ENCODE measurements at regions of chr3 and their contacts with region 1.

Region 1: GRCh38 chr3:42880601-42881451 is 5.1 kb upstream of the CYP8B1 start:
- DNase-seq: peak; percentile 79 to 92 (median 86)
- H3K4me3 ChIP-seq: peak overlapping the region in 3 of 4 donors; percentile 25 to 60 (median 40)
- H3K27ac ChIP-seq: peak overlapping the region in 3 of 5 donors; percentile 9 to 47 (median 45)
- H3K4me1 ChIP-seq: peaks cover 0 to 8% of the 10 kb centered on the region in 2 donors
- H3K27me3 ChIP-seq: no peaks in the 10 kb centered on the region
- CTCF ChIP-seq: peak; percentile 74 to 96 (median 93)
- POLR2A ChIP-seq: no peak

Region 2: DNA sequence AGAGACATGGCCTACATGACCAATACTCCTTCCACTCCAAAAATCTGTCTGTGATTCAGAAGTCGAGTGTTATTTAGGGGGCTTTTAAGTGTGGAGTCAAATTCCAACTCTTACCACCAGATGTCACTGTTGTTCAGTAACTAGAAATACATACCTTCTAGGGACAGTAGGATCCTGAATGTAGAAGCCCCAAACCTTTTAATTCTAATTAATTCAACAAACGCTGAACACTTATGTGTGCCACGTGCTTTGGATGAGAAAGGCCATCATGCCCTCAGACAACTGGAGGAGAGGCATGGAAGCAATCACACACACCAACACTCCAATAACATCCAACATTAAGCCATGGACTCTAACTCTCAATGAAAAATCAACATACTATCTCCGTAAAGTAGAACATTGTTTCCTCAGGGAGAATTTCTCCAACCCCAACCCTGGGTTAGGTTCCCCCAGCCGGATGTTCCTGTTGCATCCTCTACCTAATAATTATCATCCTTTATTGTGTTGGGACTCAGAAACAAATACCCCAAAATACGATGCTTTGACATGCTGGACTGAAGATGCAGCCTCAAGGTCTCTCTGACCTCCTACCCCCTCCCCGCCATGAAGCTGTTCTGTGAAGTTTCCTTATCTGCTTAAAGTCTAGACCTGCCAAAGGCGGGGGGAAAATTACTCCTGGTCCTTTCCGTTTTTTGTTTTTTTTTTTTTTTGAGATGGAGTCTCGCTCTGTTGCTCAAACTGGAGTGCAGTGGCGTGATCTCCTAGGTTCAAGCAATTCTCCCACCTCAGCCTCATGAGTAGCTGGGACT is 99.7 kb before region 1 on chr3:
- intact Hi-C with region 1: loop called (anchors 2 to 10 kb)
- DNase-seq: peak in 2 of 7 donors; percentile 22 to 36
- H3K4me3 ChIP-seq: no peak overlapping the region
- H3K27ac ChIP-seq: peak overlapping the region in 2 of 5 donors; percentile 43 to 75
- H3K4me1 ChIP-seq: peaks cover 12 to 43% of the 10 kb centered on the region in 2 donors
- H3K27me3 ChIP-seq: no peaks in the 10 kb centered on the region
- CTCF ChIP-seq: peak; percentile 69 to 87 (median 80)
- POLR2A ChIP-seq: no peak

Region 3: DNA sequence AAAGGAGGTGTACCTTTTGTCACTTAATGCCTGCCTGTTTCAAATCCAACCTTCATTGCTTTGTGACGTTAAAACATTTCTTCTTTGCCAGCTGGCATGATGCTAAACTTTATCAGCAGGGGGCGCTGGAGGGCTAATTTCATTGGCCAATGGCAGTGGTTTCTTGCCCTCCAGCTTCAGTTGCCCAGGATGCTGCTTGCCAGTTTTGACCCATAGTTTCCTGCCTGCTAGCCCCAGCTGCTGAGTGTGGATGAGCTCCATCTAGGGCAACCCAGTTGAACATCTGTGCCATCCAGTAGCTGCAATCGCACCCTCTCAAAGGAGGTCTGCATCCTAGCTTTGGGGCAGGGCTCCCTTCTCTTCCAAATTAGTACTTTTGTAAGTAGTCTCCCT is 49.5 kb before region 1 on chr3:
- intact Hi-C with region 1: loop called (anchors 2 to 5 kb)
- DNase-seq: peak; percentile 81 to 92 (median 85)
- H3K4me3 ChIP-seq: no peak overlapping the region
- H3K27ac ChIP-seq: no peak overlapping the region
- H3K4me1 ChIP-seq: no peaks in the 10 kb centered on the region
- H3K27me3 ChIP-seq: no peaks in the 10 kb centered on the region
- CTCF ChIP-seq: peak; percentile 69 to 84 (median 80)
- POLR2A ChIP-seq: no peak

Region 4: GRCh38 chr3:42839616-42840015 is 41.2 kb before region 1 on chr3:
- intact Hi-C with region 1: loop called in 1 of 2 experiments (anchors 5 kb)
- DNase-seq: peak; percentile 31 to 82 (median 59)
- H3K4me3 ChIP-seq: no peak overlapping the region
- H3K27ac ChIP-seq: no peak overlapping the region
- H3K4me1 ChIP-seq: peaks cover 0 to 14% of the 10 kb centered on the region in 2 donors
- H3K27me3 ChIP-seq: no peaks in the 10 kb centered on the region
- CTCF ChIP-seq: peak; percentile 80 to 97 (median 90)
- POLR2A ChIP-seq: no peak